ENCODE measurements at regions of chr1 and their contacts with region 1.

Region 1: GRCh38 chr1:9292361-9293240 is at the start of gene SPSB1:
- DNase-seq: peak; percentile 70
- H3K4me3 Mint-ChIP-seq: peak within 1 kb of the TSS; percentile 60
- H3K27ac Mint-ChIP-seq: no peak within 1 kb of the TSS
- H3K4me1 Mint-ChIP-seq: no peaks in the 10 kb centered on the region
- H3K27me3 Mint-ChIP-seq: no peaks in the 10 kb centered on the region
- CTCF ChIP-seq: peak; percentile 19
- total RNA-seq, gene SPSB1: 8.2 and 16.2 TPM in 2 replicates

Region 2: GRCh38 chr1:9110669-9111356 is 181.8 kb before region 1 on chr1:
- CTCF ChIA-PET with region 1: interaction called, 3 read pairs
- POLR2A ChIA-PET with region 1: interaction called, 3 read pairs
- intact Hi-C with region 1: loop called (anchors 10 kb)
- DNase-seq: peak; percentile 99
- H3K4me3 Mint-ChIP-seq: no peak overlapping the region
- H3K27ac Mint-ChIP-seq: no peak overlapping the region
- H3K4me1 Mint-ChIP-seq: peaks cover 41% of the 10 kb centered on the region
- H3K27me3 Mint-ChIP-seq: no peaks in the 10 kb centered on the region
- CTCF ChIP-seq: peak; percentile 92

Region 3: GRCh38 chr1:9133870-9134585 is 158.6 kb before region 1 on chr1:
- CTCF ChIA-PET with region 1: no interaction called
- POLR2A ChIA-PET with region 1: no interaction called
- intact Hi-C with region 1: no loop called
- DNase-seq: no peak
- H3K4me3 Mint-ChIP-seq: no peak overlapping the region
- H3K27ac Mint-ChIP-seq: no peak overlapping the region
- H3K4me1 Mint-ChIP-seq: peaks cover 10% of the 10 kb centered on the region
- H3K27me3 Mint-ChIP-seq: no peaks in the 10 kb centered on the region
- CTCF ChIP-seq: no peak

Region 4: GRCh38 chr1:9211291-9211811 is 81.2 kb before region 1 on chr1:
- CTCF ChIA-PET with region 1: no interaction called
- POLR2A ChIA-PET with region 1: no interaction called
- intact Hi-C with region 1: no loop called
- DNase-seq: no peak
- H3K4me3 Mint-ChIP-seq: no peak overlapping the region
- H3K27ac Mint-ChIP-seq: no peak overlapping the region
- H3K4me1 Mint-ChIP-seq: no peaks in the 10 kb centered on the region
- H3K27me3 Mint-ChIP-seq: no peaks in the 10 kb centered on the region
- CTCF ChIP-seq: no peak

Region 5: GRCh38 chr1:9280015-9280860 is 12.4 kb before region 1 on chr1:
- CTCF ChIA-PET with region 1: interaction called, 12 read pairs
- POLR2A ChIA-PET with region 1: interaction called, 6 read pairs
- intact Hi-C with region 1: no loop called
- DNase-seq: peak; percentile 91
- H3K4me3 Mint-ChIP-seq: peak overlapping the region; percentile 62
- H3K27ac Mint-ChIP-seq: no peak overlapping the region
- H3K4me1 Mint-ChIP-seq: peaks cover 37% of the 10 kb centered on the region
- H3K27me3 Mint-ChIP-seq: no peaks in the 10 kb centered on the region
- CTCF ChIP-seq: peak; percentile 14

Region 6: GRCh38 chr1:9438431-9439073 is 146.0 kb after region 1 on chr1:
- CTCF ChIA-PET with region 1: interaction called, 3 read pairs
- POLR2A ChIA-PET with region 1: interaction called, 17 read pairs
- intact Hi-C with region 1: no loop called
- DNase-seq: peak; percentile 91
- H3K4me3 Mint-ChIP-seq: peak overlapping the region; percentile 55
- H3K27ac Mint-ChIP-seq: peak overlapping the region; percentile 94
- H3K4me1 Mint-ChIP-seq: peaks cover 30% of the 10 kb centered on the region
- H3K27me3 Mint-ChIP-seq: no peaks in the 10 kb centered on the region
- CTCF ChIP-seq: no peak

Region 7: DNA sequence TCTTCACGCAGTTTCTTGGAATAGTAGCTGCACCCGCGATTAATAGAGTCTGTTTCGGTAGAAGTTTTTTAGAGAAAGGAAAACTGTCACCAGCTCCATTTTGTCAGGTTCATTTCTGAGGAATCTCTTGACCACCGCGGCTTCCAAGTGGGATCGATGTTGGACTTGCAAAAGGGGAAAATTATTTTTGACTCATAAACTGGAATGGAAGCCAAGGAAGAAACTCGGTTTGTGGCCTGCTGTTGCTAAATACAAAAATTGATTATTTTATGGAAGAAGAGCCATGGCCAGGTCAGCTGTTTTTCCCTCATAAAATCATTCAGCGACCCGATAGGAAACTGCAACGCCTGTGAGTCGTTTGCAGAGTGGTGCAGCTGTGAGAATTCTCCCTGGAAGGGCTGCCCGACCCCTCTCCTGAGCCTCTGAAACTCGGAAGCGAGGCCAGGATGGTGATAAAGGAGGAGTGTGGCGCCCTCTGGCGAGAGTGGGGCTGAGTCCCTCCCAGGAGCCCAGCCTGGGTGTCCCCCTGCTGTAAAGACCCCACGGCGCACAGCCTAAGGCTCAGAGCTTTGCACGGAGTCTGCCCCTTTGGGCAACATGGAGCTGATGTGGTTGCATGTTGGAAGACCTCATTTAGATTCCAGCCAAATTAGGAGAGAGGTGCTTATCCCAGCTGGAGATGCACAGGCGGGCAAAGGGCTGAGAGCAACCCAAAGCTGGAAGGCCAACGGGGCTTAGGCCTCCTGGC is 163.1 kb after region 1 on chr1:
- CTCF ChIA-PET with region 1: interaction called, 10 read pairs
- POLR2A ChIA-PET with region 1: interaction called, 4 read pairs
- intact Hi-C with region 1: loop called (anchors 1 kb)
- DNase-seq: peak; percentile 63
- H3K4me3 Mint-ChIP-seq: no peak overlapping the region
- H3K27ac Mint-ChIP-seq: no peak overlapping the region
- H3K4me1 Mint-ChIP-seq: no peaks in the 10 kb centered on the region
- H3K27me3 Mint-ChIP-seq: no peaks in the 10 kb centered on the region
- CTCF ChIP-seq: peak; percentile 78

Region 8: DNA sequence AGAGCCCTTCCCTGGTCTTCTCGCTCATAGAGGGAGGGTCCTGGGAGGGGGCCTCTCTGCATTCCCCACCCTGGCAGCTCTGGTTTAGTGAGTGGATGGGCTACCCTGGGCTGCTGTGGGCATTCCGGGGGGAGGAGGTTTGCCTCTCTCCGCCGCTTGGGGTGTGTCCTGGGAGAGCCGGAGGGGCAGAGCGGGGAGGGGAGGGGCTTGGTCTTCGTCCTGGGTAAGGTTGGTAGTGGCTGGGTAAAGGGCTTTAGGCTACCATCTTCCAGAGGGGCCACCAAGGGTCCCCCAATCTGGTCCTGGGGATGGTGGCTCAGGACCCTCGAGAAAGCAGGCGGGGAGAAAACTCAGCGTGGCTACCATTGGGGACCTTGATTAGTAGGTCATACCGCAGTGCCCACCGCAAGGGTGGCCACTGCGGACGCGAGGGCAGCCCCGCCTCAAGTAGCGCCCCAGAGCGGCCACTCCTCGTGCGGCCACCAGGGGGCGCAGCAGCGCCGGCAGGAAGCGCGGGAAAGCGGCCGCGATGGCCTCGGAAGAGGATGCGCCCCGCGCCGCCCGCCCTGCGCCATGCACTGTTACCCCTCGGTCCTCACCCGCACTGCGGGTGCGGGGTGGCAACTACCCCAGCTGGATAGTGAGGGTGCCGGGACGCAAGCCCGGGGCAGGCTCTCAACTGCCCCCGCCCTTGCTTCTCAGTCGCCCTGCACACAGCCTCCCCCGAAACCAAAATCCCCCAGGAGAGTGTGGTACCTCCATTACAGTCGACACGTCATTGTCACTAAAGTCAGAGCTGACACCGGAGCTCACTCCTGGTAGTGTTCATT is 202.5 kb after region 1 on chr1:
- CTCF ChIA-PET with region 1: interaction called, 22 read pairs
- POLR2A ChIA-PET with region 1: interaction called, 14 read pairs
- intact Hi-C with region 1: loop called (anchors 1 kb)
- DNase-seq: peak; percentile 29
- H3K4me3 Mint-ChIP-seq: no peak overlapping the region
- H3K27ac Mint-ChIP-seq: no peak overlapping the region
- H3K4me1 Mint-ChIP-seq: no peaks in the 10 kb centered on the region
- H3K27me3 Mint-ChIP-seq: no peaks in the 10 kb centered on the region
- CTCF ChIP-seq: peak; percentile 90

Measured in MCF 10A (cell line).